ENCODE measurements at regions of chr5 and their contacts with region 1.

Region 1: DNA sequence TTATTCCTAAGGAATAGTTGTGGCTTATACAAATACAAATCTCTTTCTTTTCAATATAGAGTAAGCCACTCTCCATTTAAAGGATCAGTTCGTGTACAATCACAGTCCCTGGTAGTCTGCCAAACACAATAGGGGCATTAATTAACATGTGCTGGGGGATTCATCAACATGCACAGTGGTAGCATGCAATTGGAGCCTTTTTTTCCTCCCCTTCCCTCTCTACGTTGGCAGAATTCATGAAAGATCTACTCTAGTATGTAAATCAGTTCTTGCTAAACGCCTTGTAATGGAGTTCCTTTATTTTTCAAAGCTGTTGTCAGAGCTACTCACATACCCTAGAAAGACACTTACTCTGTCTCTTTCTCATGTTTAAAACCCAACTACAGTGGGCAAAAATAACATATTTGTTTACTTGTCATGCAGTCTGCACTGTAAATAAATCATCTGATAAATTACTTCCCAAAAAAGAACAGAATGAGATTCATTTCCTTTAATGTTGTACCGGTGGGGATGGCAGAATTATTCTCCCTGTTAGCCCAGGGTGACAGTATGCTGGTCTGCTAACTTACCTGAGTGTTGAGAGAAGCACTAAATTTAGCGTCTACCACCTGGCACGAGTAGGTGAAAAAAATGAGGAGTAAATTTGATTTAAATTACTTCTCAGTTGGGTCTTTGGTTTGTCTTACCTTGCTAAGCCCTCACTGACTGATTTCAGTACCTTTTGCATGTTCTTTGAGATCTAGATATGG is 341.5 kb upstream of the CCNH start:
- DNase-seq: no peak
- H3K4me3 ChIP-seq: peak overlapping the region in 16 of 59 donors; percentile 1 to 39 (median 10)
- H3K27ac ChIP-seq: peak overlapping the region in 54 of 59 donors; percentile 19 to 98 (median 91)
- H3K27me3 ChIP-seq: no peaks in the 10 kb centered on the region
- CTCF ChIP-seq: no peak

Region 2: GRCh38 chr5:87671146-87671545 is 83.0 kb before region 1 on chr5:
- intact Hi-C with region 1: loop called in 1 of 2 experiments (anchors 10 kb)
- DNase-seq: no peak
- H3K4me3 ChIP-seq: no peak overlapping the region
- H3K27ac ChIP-seq: no peak overlapping the region
- H3K27me3 ChIP-seq: no peaks in the 10 kb centered on the region
- CTCF ChIP-seq: no peak

Measured in dorsolateral prefrontal cortex (tissue), 120 donors.